Activated B cell treated with CpG ODN at 0.5 μM for 24 hours (primary cell): ENCODE measurements at regions of chr10 and their contacts with region 1.

Region 1: DNA sequence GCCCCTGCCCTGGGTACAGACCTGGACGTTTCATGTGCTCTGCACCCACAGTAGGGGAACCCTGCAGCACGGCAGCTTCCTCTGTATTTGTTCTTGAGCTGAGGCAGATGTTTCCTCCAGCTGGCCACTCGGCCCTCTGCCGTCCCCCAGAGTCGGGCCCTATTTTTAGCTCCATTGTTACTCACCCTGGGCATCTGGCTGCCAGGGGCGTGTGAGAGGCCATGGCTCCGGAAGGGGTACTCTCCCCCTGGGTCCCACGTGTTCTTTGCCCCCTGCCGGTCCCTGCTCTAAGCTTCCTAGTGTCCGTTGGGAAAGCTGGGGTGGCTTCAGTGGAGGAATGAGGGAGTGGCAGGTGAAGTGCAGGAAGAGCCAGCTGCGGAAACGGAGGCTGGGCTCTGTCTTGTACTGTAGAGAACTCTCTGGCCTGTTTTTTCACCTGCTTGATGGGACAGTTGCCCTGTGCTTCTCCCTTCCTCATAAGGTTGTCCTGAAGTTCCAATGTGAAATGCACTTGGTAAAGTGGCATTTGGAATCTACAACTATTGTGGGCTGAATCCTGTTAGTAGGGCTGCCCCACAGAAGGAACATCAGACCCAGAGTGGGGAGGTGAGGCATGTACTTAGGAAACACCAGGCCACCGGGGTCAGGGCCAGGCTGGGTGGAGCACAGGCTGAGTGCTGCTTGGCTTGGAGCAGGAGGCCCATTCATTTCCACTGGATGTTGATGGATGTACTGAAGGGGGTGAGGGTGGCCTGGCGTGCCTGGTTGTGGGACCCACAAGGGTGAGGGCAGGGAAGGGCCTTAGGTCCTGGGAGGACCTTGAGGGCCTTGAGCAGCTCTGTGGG is 30.6 kb downstream of the PALD1 start:
- DNase-seq: no peak
- ATAC-seq: peak; percentile 61
- H3K4me3 Mint-ChIP-seq: peak overlapping the region; percentile 44
- H3K27ac Mint-ChIP-seq: no peak overlapping the region
- H3K4me1 Mint-ChIP-seq: peaks cover 35% of the 10 kb centered on the region
- H3K27me3 Mint-ChIP-seq: no peaks in the 10 kb centered on the region
- CTCF ChIP-seq: no peak

Region 2: DNA sequence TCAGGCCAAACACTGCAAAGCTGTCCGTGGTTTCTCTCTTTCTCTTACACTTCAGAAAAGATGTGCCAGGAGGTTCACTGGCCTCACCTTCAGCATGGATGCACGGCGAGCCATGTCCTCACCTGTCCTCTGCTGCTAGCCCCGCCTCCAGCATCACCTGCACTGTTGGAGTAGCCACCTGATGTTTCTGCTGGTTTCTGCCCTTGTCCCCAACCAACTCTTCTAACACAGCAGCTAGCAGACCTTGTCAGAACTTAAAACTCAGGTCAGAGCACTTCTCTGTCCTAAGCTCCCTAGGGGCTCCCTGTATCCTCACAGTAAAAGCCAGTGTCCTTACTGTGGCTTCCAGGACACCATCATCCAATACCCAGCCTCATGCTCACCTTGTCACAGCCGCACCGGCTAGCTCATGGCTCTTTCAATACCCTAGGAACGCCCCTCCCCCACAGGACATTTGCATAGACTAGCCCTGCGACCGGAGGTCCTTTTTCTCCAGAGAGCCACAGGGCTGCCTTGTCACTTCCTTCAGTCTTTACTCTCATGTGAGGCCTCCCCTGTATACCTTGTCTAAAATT is 15.4 kb before region 1 on chr10:
- CTCF ChIA-PET with region 1: interaction called, 11 read pairs
- POLR2A ChIA-PET with region 1: interaction called, 15 read pairs
- intact Hi-C with region 1: loop called (anchors 1 kb)
- DNase-seq: peak; percentile 55
- ATAC-seq: peak; percentile 74
- H3K4me3 Mint-ChIP-seq: peak overlapping the region; percentile 71
- H3K27ac Mint-ChIP-seq: peak overlapping the region; percentile 91
- H3K4me1 Mint-ChIP-seq: peaks cover 77% of the 10 kb centered on the region
- H3K27me3 Mint-ChIP-seq: no peaks in the 10 kb centered on the region
- CTCF ChIP-seq: no peak

Region 3: DNA sequence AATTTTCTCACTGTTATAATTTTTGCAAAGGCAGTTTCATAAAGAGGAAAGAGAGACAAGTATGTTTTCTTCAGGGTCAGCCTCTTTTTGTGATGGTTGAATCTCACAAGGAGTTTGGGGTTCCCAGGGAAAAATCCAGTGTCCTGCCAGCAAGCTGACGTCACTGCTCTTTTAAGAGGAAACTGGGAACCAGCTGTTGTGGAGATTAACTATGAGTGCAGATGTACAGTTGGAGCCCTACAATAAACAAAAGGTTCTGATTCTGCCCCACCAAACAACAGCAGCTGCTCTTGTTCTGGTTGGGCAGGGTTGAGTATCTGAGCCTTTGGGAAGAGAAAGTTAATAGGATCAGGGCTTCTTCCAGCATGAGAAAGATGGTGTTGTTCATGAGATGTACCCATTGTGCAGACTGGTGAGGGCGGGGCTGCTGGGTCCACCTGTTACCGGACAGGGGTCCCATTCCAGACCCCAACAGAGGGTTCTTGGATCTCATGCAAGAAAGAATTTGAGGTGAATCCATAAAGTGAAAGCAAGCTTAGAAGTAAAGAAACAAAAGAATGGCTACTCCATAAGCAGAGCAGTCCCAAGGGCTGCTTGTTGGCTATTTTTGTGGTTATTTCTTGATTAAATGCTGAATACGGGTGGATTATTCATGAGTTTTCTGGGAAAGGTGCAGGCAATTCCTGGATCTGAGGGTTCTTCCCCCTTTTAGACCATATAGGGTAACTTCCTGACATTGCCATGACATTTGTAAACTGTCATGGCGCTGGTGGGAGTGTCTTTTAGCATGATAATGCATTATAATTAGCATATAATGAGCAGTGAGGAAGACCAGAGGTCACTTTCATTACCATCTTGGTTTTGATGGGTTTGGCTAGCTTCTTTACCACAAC is 80.9 kb after region 1 on chr10:
- CTCF ChIA-PET with region 1: no interaction called
- POLR2A ChIA-PET with region 1: no interaction called
- intact Hi-C with region 1: no loop called
- DNase-seq: no peak
- ATAC-seq: no peak
- H3K4me3 Mint-ChIP-seq: no peak overlapping the region
- H3K27ac Mint-ChIP-seq: no peak overlapping the region
- H3K4me1 Mint-ChIP-seq: no peaks in the 10 kb centered on the region
- H3K27me3 Mint-ChIP-seq: peaks cover 7% of the 10 kb centered on the region
- CTCF ChIP-seq: no peak

Region 4: GRCh38 chr10:70699659-70700174 is 190.6 kb after region 1 on chr10:
- CTCF ChIA-PET with region 1: no interaction called
- POLR2A ChIA-PET with region 1: no interaction called
- intact Hi-C with region 1: no loop called
- DNase-seq: no peak
- ATAC-seq: no peak
- H3K4me3 Mint-ChIP-seq: no peak overlapping the region
- H3K27ac Mint-ChIP-seq: no peak overlapping the region
- H3K4me1 Mint-ChIP-seq: no peaks in the 10 kb centered on the region
- H3K27me3 Mint-ChIP-seq: no peaks in the 10 kb centered on the region
- CTCF ChIP-seq: no peak